ENCODE measurements at regions of chr16 and their contacts with region 1.

Region 1: GRCh38 chr16:89442990-89443731 is 47.2 kb downstream of the ANKRD11 start:
- DNase-seq: peak; percentile 96
- H3K4me3 Mint-ChIP-seq: peak overlapping the region; percentile 54
- H3K27ac Mint-ChIP-seq: peak overlapping the region; percentile 81
- H3K4me1 Mint-ChIP-seq: peaks cover 78% of the 10 kb centered on the region
- H3K27me3 Mint-ChIP-seq: no peaks in the 10 kb centered on the region
- CTCF ChIP-seq: no peak

Region 2: GRCh38 chr16:89476804-89477261 is 33.7 kb after region 1 on chr16:
- CTCF ChIA-PET with region 1: no interaction called
- intact Hi-C with region 1: loop called (anchors 5 kb)
- DNase-seq: no peak
- H3K4me3 Mint-ChIP-seq: peak overlapping the region; percentile 17
- H3K27ac Mint-ChIP-seq: peak overlapping the region; percentile 16
- H3K4me1 Mint-ChIP-seq: peaks cover 86% of the 10 kb centered on the region
- H3K27me3 Mint-ChIP-seq: no peaks in the 10 kb centered on the region
- CTCF ChIP-seq: no peak

Measured in Calu3 (cell line).